Activated CD4-positive, alpha-beta T cell treated with anti-CD3 and anti-CD28 coated beads for 36 hours (primary cell): ENCODE measurements at regions of chr4 and their contacts with region 1.

Region 1: DNA sequence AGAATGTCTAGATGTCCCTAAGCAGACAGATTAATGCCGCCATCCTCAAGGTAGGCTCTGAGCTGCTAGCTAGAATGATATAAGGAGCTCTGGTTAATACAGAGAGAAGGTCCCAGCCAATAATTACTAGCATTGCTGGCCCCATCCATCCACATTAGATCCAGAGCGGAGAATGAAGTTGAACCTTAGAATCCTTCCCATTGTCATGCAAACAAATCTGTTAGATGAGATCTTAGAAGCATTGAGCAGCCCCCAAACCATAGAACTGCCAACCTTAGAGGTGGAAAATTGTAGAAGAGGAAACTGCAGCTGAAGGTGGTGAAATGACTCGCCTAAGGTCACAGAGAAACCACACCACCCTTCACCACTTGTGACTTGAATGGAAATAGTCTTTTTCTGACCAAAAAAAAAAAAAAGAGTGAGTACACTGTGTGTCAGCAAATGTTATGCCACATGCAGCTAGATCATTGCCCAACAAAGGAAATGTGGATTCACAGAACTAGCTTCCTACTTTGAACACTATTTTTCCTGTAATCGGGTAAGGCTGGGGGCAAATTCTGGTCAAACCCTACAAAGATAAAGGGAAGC is 162.1 kb downstream of the SMIM20 start:
- DNase-seq: peak; percentile 78
- ATAC-seq: peak; percentile 53
- H3K4me3 Mint-ChIP-seq: peak overlapping the region; percentile 26
- H3K27ac Mint-ChIP-seq: peak overlapping the region; percentile 90
- H3K4me1 Mint-ChIP-seq: peaks cover 73% of the 10 kb centered on the region
- H3K27me3 Mint-ChIP-seq: peaks cover 6% of the 10 kb centered on the region

Region 2: GRCh38 chr4:25320773-25321172 is 755.3 kb before region 1 on chr4:
- CTCF ChIA-PET with region 1: no interaction called
- POLR2A ChIA-PET with region 1: interaction called, 10 read pairs
- intact Hi-C with region 1: no loop called
- DNase-seq: no peak
- ATAC-seq: peak; percentile 93
- H3K4me3 Mint-ChIP-seq: peak overlapping the region; percentile 16
- H3K27ac Mint-ChIP-seq: peak overlapping the region; percentile 89
- H3K4me1 Mint-ChIP-seq: peaks cover 37% of the 10 kb centered on the region
- H3K27me3 Mint-ChIP-seq: no peaks in the 10 kb centered on the region

Region 3: DNA sequence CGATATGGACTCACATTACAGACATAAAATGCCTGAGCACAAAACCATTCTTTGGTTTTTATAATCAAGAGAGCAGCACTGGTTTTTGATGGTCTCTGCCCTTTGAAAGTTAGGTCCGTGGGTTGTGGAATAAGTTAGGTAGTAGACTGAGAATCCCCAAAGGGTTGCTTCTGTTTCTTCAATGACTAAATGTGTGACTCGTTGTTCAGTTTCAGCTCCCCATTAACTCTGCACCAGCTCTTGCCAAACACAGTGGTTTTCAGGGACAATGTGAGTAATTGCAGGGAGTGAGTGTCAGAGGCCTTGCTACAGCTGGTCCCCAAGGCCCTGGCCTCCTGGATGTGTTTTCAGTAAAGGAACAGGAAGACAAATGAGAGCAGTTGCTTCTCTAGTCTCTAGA is 137.3 kb before region 1 on chr4:
- CTCF ChIA-PET with region 1: interaction called, 3 read pairs
- POLR2A ChIA-PET with region 1: no interaction called
- intact Hi-C with region 1: loop called (anchors 1 to 5 kb)
- DNase-seq: peak; percentile 76
- ATAC-seq: peak; percentile 97
- H3K4me3 Mint-ChIP-seq: peak overlapping the region; percentile 5
- H3K27ac Mint-ChIP-seq: peak overlapping the region; percentile 72
- H3K4me1 Mint-ChIP-seq: peaks cover 22% of the 10 kb centered on the region
- H3K27me3 Mint-ChIP-seq: peaks cover 18% of the 10 kb centered on the region

Region 4: GRCh38 chr4:26110436-26110854 is 34.4 kb after region 1 on chr4:
- CTCF ChIA-PET with region 1: no interaction called
- POLR2A ChIA-PET with region 1: no interaction called
- intact Hi-C with region 1: no loop called
- DNase-seq: no peak
- ATAC-seq: no peak
- H3K4me3 Mint-ChIP-seq: no peak overlapping the region
- H3K27ac Mint-ChIP-seq: no peak overlapping the region
- H3K4me1 Mint-ChIP-seq: no peaks in the 10 kb centered on the region
- H3K27me3 Mint-ChIP-seq: peaks cover 19% of the 10 kb centered on the region

Region 5: GRCh38 chr4:26130173-26130572 is 54.1 kb after region 1 on chr4:
- CTCF ChIA-PET with region 1: no interaction called
- POLR2A ChIA-PET with region 1: interaction called, 4 read pairs
- intact Hi-C with region 1: loop called in 1 of 2 experiments (anchors 2 kb)
- DNase-seq: peak; percentile 39
- ATAC-seq: peak; percentile 68
- H3K4me3 Mint-ChIP-seq: no peak overlapping the region
- H3K27ac Mint-ChIP-seq: peak overlapping the region; percentile 27
- H3K4me1 Mint-ChIP-seq: peaks cover 47% of the 10 kb centered on the region
- H3K27me3 Mint-ChIP-seq: peaks cover 2% of the 10 kb centered on the region

Region 6: GRCh38 chr4:26197018-26197779 is 121.1 kb after region 1 on chr4:
- CTCF ChIA-PET with region 1: interaction called, 6 read pairs
- POLR2A ChIA-PET with region 1: interaction called, 18 read pairs
- intact Hi-C with region 1: loop called (anchors 1 kb)
- DNase-seq: peak; percentile 80
- ATAC-seq: peak; percentile 75
- H3K4me3 Mint-ChIP-seq: peak overlapping the region; percentile 52
- H3K27ac Mint-ChIP-seq: peak overlapping the region; percentile 91
- H3K4me1 Mint-ChIP-seq: peaks cover 68% of the 10 kb centered on the region
- H3K27me3 Mint-ChIP-seq: peaks cover 2% of the 10 kb centered on the region

Region 7: DNA sequence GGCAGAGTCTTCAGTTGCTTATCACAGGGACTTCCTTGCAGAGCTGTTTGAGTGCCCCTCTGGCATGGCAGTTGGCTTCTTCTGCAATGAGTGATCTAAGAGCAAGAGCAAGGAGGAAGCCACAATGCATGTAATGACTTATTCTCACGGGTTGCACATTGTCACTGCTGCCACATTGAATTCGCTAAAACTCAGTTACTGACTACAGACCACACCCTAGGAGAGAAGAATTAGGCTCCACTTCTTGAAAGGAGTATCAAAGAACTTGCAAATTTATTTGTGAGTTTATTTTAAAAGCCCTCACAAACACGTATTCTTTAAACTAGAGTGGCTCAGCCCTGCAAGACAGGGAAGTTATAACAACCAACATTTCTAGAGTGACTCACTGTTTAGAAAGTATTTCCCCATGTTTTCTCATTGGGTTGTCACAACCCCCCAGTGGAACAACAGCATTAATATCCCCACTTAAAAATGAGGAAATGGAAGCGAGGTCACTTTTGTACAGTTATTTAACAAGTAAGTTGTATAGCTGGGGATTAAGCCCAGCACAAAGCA is 212.3 kb after region 1 on chr4:
- CTCF ChIA-PET with region 1: no interaction called
- POLR2A ChIA-PET with region 1: no interaction called
- intact Hi-C with region 1: no loop called
- DNase-seq: peak; percentile 67
- ATAC-seq: peak; percentile 95
- H3K4me3 Mint-ChIP-seq: no peak overlapping the region
- H3K27ac Mint-ChIP-seq: peak overlapping the region; percentile 11
- H3K4me1 Mint-ChIP-seq: peaks cover 16% of the 10 kb centered on the region
- H3K27me3 Mint-ChIP-seq: no peaks in the 10 kb centered on the region

Region 8: GRCh38 chr4:26337612-26338011 is 261.5 kb after region 1 on chr4:
- CTCF ChIA-PET with region 1: no interaction called
- POLR2A ChIA-PET with region 1: no interaction called
- intact Hi-C with region 1: no loop called
- DNase-seq: no peak
- ATAC-seq: no peak
- H3K4me3 Mint-ChIP-seq: no peak overlapping the region
- H3K27ac Mint-ChIP-seq: no peak overlapping the region
- H3K4me1 Mint-ChIP-seq: peaks cover 58% of the 10 kb centered on the region
- H3K27me3 Mint-ChIP-seq: no peaks in the 10 kb centered on the region

Region 9: GRCh38 chr4:26885912-26886274 is 809.8 kb after region 1 on chr4:
- CTCF ChIA-PET with region 1: no interaction called
- POLR2A ChIA-PET with region 1: interaction called, 3 read pairs
- intact Hi-C with region 1: loop called in 1 of 2 experiments (anchors 5 kb)
- DNase-seq: peak; percentile 29
- ATAC-seq: peak; percentile 63
- H3K4me3 Mint-ChIP-seq: peak overlapping the region; percentile 67
- H3K27ac Mint-ChIP-seq: peak overlapping the region; percentile 92
- H3K4me1 Mint-ChIP-seq: peaks cover 64% of the 10 kb centered on the region
- H3K27me3 Mint-ChIP-seq: no peaks in the 10 kb centered on the region